PC-3 (cell line): ENCODE measurements at regions of chr2 and their contacts with region 1.

Region 1: GRCh38 chr2:101736861-101737291 is 39.4 kb downstream of the MAP4K4 start:
- DNase-seq: peak; percentile 91
- ATAC-seq: peak; percentile 79
- H3K4me3 ChIP-seq: no peak overlapping the region
- H3K27ac ChIP-seq: peak overlapping the region; percentile 85
- H3K4me1 ChIP-seq: peaks cover 68% of the 10 kb centered on the region
- H3K27me3 ChIP-seq: no peaks in the 10 kb centered on the region
- CTCF ChIP-seq: no peak

Region 2: GRCh38 chr2:100692381-100692780 is 1044.5 kb before region 1 on chr2:
- CTCF ChIA-PET with region 1: no interaction called
- POLR2A ChIA-PET with region 1: no interaction called
- intact Hi-C with region 1: no loop called
- DNase-seq: no peak
- ATAC-seq: no peak
- H3K4me3 ChIP-seq: no peak overlapping the region
- H3K27ac ChIP-seq: no peak overlapping the region
- H3K4me1 ChIP-seq: no peaks in the 10 kb centered on the region
- H3K27me3 ChIP-seq: no peaks in the 10 kb centered on the region
- CTCF ChIP-seq: no peak

Region 3: GRCh38 chr2:101704046-101704466 is 32.8 kb before region 1 on chr2:
- CTCF ChIA-PET with region 1: no interaction called
- POLR2A ChIA-PET with region 1: no interaction called
- intact Hi-C with region 1: loop called (anchors 5 kb)
- DNase-seq: no peak
- ATAC-seq: no peak
- H3K4me3 ChIP-seq: no peak overlapping the region
- H3K27ac ChIP-seq: no peak overlapping the region
- H3K4me1 ChIP-seq: peaks cover 15% of the 10 kb centered on the region
- H3K27me3 ChIP-seq: no peaks in the 10 kb centered on the region
- CTCF ChIP-seq: no peak

Region 4: DNA sequence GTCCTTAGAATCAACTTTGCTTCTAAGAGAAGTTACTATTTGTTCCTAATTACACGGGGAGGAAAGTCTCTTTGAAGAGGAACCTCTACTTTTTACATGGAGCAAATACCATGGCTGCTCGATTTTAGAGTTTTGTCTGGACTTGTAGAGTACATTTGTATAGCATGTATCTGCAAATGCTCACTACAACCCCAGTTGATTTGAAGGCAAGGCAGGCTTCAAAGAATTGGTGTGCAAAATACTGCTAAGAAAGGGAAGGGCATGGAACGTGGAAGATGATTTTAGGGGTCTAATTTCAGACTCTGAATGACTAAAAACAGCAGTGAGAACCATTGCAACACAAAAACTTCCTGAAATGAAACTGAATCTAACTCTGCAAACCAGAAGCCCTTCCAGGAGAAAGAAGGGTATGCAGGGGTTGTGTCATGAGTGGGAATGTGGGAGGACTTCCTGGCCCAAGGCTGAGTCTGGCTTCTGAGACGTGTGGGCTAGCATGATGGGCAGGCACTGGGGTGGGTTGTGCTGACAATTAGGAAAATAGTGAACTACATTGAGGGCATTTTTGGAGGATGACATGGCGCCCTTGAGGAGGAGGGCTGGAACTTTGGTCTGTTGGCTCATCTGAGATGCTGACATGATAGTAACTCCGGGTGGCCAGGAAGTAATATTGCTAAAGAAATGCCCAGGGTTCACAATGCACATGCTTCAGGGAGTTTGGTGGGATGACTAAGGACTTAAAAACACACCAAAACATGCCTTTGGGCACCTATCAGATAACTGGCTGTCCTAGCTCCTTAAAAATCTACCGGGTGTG is 236.0 kb after region 1 on chr2:
- CTCF ChIA-PET with region 1: no interaction called
- POLR2A ChIA-PET with region 1: no interaction called
- intact Hi-C with region 1: no loop called
- DNase-seq: peak; percentile 79
- ATAC-seq: peak; percentile 48
- H3K4me3 ChIP-seq: no peak overlapping the region
- H3K27ac ChIP-seq: peak overlapping the region; percentile 49
- H3K4me1 ChIP-seq: peaks cover 11% of the 10 kb centered on the region
- H3K27me3 ChIP-seq: no peaks in the 10 kb centered on the region
- CTCF ChIP-seq: no peak